ENCODE measurements at regions of chr19 and their contacts with region 1.

Region 1: GRCh38 chr19:11798391-11799330 is at the start of gene ZNF491:
- DNase-seq: peak; percentile 95
- ATAC-seq: peak; percentile 99
- total RNA-seq, gene ZNF491: 3.1 TPM

Region 2: DNA sequence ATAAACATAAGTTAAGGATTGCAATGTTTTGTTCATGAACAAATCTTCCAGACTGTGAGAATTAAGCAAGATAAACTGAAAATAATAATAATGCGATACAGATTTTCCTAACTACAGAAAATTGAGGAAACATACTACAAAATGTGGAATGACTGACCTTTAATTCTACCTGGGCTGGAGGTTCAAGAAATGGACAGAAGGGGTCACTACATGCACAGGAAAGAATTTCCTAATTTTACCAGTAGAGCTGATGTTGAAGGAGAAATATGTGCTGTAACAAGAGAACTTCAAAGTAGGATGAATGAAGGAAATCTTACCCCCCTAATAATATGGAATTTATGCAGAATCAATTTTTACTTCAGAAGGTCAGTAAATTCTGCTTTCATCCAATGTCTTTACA is 139.0 kb before region 1 on chr19:
- intact Hi-C with region 1: no loop called
- DNase-seq: no peak
- ATAC-seq: no peak

Region 3: GRCh38 chr19:11694533-11695439 is 103.9 kb before region 1 on chr19:
- intact Hi-C with region 1: loop called (anchors 10 kb)
- DNase-seq: peak; percentile 98
- ATAC-seq: peak; percentile 100

Region 4: DNA sequence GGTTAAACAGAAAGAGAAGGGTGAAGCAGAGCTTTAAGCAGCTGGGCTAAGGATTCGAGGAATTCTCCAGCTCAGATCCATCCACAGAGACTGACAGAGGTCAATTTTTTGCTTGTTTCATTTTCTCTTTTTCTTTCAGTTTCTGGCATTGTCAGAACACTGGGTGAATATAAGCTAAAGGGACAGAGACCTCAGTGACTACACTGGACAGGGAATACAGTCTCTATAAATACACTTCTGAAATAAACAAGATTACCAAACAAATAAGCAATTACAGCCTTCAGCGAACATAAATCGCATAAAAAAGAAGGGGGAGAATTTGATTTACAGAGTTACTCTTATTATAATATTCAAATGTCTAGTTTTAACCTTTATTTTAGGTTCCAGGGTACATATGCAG is 35.5 kb before region 1 on chr19:
- intact Hi-C with region 1: no loop called
- DNase-seq: no peak
- ATAC-seq: no peak